Spleen (tissue), 13 donors: ENCODE measurements at regions of chr4 and their contacts with region 1.

Region 1: DNA sequence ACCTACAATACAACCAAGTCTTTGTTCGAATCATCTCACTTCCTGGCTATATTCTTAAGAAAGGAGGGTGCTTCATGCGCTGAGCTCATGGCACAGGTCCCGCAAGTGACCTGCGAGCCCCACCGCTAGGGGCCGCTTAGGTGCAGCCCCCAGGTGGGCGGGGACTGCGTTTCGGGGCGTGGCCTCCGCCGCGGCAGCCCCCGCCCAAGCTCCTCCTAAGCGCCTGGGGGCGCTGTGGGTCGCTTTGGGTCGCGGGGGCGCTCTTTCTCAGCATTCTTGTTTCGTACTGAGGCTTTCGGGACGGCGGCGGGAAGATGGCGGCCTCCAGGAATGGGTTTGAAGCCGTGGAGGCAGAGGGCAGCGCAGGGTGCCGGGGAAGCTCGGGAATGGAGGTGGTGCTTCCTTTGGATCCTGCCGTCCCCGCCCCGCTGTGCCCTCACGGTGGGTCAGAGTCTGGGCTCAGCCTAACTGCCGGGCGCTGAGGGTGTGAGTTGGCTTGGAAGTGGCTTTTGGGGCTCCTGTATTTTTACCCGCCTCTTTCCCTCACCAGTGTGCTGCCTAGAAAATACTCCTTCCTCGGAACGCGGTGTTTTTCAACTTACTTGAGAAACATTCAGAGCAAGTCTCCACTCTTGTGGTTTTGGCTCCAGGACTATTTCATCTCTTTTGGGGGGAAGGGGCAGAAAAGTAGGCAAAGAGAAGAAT is at the start of gene ZCCHC4:
- DNase-seq: peak; percentile 98
- H3K4me3 ChIP-seq: peak within 1 kb of the TSS; percentile 40 to 80 (median 68)
- H3K27ac ChIP-seq: peak within 1 kb of the TSS; percentile 58 to 86 (median 80)
- H3K4me1 ChIP-seq: peaks cover 0 to 44% (median 21%) of the 10 kb centered on the region in 6 donors
- H3K27me3 ChIP-seq: peaks cover 0 to 4% (median 0%) of the 10 kb centered on the region in 7 donors
- CTCF ChIP-seq: peak; percentile 83 to 100 (median 100)
- POLR2A ChIP-seq: peak in 1 of 3 donors; percentile 19
- total RNA-seq, gene ZCCHC4: 10.5 to 14.7 (median 13.2) TPM

Region 2: DNA sequence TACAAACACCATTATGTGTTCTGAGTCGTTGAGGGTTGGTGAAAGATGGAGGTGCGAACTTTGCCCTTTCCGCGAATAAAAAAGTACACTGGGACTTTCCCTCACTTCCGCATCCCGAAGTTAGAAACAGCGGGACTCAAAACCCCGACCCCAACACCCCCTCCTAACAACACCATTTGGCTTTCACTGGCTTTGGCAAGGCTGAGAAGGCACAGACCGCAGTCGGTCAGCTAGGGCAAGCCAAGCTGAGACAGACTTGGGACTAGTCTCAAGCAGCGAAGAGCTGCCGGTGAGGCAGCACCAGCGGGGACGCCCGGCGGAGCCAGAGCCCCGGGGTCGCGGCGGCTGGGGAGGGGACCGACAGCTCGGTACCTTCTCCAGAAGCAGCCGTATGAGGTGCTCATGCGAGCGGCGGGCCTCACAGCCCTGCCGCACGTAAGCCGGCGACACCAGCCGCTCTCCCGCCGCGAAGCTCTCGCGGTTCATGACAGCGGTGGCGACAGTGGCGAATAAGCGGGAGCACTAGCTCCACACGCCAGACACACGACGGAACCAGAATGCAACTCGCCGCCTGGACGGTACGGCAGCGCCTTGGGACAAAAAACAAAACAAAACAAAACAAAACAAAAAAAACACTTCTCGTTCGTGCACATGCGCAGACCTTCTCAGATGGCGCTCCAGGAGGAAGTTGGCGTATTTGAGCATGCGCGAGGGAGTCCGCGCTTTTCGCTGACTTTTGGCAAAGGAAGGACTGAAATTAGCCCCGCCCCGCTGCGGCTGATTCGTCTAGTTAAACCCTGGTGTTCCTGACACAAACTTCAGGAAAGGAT is 152.5 kb before region 1 on chr4 and contains the start of gene SEPSECS:
- intact Hi-C with region 1: loop called (anchors 5 kb)
- DNase-seq: peak; percentile 98
- H3K4me3 ChIP-seq: peak within 1 kb of the TSS; percentile 68 to 94 (median 82)
- H3K27ac ChIP-seq: peak within 1 kb of the TSS; percentile 93 to 98 (median 97)
- H3K4me1 ChIP-seq: peaks cover 12 to 62% (median 31%) of the 10 kb centered on the region in 6 donors
- H3K27me3 ChIP-seq: no peaks in the 10 kb centered on the region
- CTCF ChIP-seq: peak in 5 of 11 experiments; percentile 11 to 33 (median 22)
- POLR2A ChIP-seq: peak in 2 of 3 donors; percentile 38 to 40
- total RNA-seq, gene SEPSECS: 9.1 to 15.2 (median 13.2) TPM

Region 3: DNA sequence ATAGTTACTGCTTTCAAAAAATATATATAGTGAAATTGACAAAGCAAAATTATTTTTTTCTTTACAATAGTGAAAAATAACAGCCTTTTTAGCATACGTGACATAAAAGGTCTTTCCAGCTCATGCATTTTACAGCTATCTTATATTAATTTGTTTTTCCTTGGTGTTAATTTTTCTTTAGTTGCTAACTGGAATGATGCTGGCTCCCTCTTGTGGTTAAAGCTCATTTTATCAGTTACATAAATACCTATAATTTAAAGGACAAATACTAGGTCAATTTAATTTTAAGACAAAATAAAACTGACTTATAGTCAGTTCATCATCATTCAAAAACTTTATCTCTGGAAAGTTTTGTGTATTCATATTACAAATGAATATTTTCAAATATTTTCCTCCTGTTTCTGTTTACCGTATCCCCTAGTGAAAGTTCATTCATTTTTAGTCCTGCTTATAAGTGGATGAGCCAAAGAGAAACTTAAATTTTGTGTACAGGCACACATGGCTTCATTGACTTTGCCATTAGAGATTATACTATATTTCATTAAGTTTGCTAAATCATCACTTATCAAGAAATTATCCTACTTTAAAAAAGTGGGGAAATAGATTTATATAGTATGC is 54.5 kb after region 1 on chr4:
- intact Hi-C with region 1: no loop called
- DNase-seq: no peak
- H3K4me3 ChIP-seq: no peak overlapping the region
- H3K27ac ChIP-seq: no peak overlapping the region
- H3K4me1 ChIP-seq: no peaks in the 10 kb centered on the region
- H3K27me3 ChIP-seq: no peaks in the 10 kb centered on the region
- CTCF ChIP-seq: peak in 9 of 11 experiments; percentile 23 to 62 (median 51)
- POLR2A ChIP-seq: no peak